ENCODE measurements at regions of chr9 and their contacts with region 1.

Region 1: DNA sequence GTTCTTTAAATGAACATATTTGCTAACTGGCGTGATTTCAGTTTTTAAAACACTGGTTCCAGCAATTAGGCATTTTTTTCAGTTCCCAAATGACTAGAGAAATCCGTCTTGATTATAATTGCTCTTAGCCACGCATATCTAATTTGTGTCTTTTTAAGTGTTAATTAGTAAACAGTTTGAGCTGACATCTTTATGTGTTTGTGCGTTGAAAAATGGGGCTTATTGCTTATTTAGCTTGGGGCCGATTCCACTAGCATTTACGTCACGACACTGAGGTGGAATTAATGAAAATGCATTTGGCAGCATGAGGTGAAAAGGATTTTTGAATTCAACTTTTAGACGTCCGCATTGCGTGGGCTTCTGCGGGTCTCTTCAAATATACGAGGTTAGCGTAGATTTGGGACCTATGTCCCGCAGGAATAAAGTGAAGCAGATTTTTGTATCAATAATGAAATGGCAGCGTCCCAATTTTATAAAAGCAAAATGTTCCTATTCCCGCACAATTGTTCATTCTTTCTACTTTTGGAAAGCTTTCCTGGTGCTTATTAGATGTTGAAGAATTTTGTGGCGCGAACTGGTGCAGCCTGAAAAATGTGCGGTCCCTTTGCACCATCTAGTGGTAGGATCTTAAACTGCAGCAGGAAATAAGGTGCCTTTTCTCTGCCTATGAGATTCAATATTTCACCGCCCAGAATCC is 122.7 kb upstream of the LMX1B start:
- DNase-seq: peak; percentile 66
- ATAC-seq: no peak
- H3K4me3 Mint-ChIP-seq: no peak overlapping the region
- H3K27ac Mint-ChIP-seq: no peak overlapping the region
- H3K4me1 Mint-ChIP-seq: peaks cover 16% of the 10 kb centered on the region
- H3K27me3 Mint-ChIP-seq: no peaks in the 10 kb centered on the region

Region 2: DNA sequence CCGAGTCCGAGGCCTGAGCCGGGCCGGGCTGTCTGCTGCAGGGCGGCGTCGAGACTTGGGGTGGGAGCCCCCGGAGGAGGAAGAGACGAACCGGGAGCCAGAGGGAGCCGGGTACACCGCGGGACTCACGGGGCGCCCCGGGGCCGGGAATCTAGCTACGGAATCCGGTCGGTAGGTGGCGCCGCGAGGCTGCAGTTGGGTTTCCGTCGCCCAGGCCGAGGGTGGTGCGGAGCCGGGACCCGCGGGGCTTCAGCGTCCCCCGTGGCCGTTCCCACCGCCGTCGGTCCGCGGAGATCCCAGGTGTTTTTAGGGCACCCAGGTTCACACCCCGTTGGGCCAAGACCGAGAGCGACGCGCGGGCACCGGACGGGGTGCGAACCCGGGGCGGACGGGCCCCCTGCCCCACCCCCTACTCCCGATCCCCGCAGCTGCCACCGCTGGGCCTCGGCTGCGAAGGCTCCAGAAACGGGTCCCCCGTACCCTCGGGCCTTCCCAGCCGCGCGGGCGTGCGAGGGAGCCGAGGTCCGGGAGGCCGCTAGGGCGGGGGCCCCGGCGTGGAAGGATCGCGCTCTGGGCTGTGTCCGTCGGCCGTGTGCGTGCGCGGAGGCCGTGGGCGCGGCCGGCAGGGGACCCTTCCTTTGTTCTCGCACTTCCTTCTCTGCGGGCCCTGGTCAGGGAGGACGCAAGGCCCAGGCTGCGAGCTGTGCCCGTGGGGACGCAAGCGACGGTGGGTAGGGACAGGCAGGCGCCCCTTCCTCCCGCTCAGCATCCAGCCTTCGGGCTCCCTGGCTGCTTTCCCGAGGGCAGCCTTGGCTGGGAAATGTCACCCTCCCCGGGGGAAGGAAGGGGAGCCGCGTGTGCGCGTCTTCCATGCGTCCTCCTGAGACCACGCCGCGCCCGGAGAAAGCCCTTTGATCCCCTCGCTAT is 1082.8 kb before region 1 on chr9:
- CTCF ChIA-PET with region 1: interaction called, 14 read pairs
- DNase-seq: peak; percentile 78
- ATAC-seq: peak; percentile 85
- H3K4me3 Mint-ChIP-seq: peak overlapping the region; percentile 38
- H3K27ac Mint-ChIP-seq: no peak overlapping the region
- H3K4me1 Mint-ChIP-seq: peaks cover 12% of the 10 kb centered on the region
- H3K27me3 Mint-ChIP-seq: peaks cover 22% of the 10 kb centered on the region

Region 3: DNA sequence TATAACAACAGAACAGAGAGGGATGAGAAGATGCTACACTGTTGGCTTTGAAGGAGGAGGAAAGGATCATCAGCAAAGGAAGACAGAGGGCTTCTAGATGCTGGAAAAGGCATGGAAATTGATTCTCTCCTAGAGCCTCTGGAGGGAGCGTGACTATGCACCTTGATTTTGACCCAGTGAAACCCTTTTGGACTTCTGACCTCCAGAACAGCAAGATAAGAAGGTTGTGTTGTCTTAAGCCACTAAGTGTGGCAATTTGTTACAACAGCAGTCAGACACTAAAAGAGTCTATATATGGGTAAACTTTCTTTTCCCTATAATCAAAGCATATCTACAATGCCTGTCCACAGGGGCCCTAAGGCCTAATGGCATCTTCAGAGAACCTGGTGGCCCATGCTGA is 220.5 kb before region 1 on chr9:
- CTCF ChIA-PET with region 1: no interaction called
- DNase-seq: no peak
- ATAC-seq: no peak
- H3K4me3 Mint-ChIP-seq: no peak overlapping the region
- H3K27ac Mint-ChIP-seq: no peak overlapping the region
- H3K4me1 Mint-ChIP-seq: no peaks in the 10 kb centered on the region
- H3K27me3 Mint-ChIP-seq: peaks cover 16% of the 10 kb centered on the region

Region 4: DNA sequence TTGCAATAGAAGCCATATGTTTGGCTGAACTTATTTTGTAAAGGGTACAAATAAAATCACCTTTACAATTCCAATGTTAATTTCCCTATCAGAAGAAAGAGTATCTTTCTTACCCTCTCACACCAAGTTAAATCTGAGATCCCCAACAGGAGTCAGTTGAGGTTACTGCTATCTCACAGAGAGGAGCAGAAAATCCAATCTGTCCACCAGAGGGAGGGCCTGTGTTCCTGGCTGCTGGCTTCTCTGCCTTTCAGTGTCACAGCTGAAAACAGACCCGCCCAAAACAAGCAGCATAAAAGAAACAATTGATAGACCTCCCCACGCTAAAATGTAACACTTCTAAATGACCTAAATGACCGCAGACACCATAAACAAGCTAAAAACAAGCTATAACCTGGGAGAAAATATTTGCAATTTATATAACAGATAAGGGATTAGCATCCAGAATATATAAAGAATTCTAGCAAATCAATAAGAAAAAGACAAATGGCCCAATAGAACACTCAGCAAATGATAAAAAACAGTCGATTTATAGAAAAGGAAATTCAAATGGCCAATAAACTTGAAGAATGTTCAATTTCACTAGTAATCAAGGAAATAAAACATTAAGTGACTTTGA is 188.9 kb before region 1 on chr9:
- CTCF ChIA-PET with region 1: interaction called, 30 read pairs
- DNase-seq: peak; percentile 81
- ATAC-seq: peak; percentile 93
- H3K4me3 Mint-ChIP-seq: no peak overlapping the region
- H3K27ac Mint-ChIP-seq: peak overlapping the region; percentile 16
- H3K4me1 Mint-ChIP-seq: peaks cover 18% of the 10 kb centered on the region
- H3K27me3 Mint-ChIP-seq: peaks cover 4% of the 10 kb centered on the region

Region 5: GRCh38 chr9:126317513-126317912 is 173.5 kb before region 1 on chr9:
- CTCF ChIA-PET with region 1: interaction called, 14 read pairs
- DNase-seq: peak; percentile 59
- ATAC-seq: no peak
- H3K4me3 Mint-ChIP-seq: no peak overlapping the region
- H3K27ac Mint-ChIP-seq: no peak overlapping the region
- H3K4me1 Mint-ChIP-seq: peaks cover 34% of the 10 kb centered on the region
- H3K27me3 Mint-ChIP-seq: no peaks in the 10 kb centered on the region

Region 6: DNA sequence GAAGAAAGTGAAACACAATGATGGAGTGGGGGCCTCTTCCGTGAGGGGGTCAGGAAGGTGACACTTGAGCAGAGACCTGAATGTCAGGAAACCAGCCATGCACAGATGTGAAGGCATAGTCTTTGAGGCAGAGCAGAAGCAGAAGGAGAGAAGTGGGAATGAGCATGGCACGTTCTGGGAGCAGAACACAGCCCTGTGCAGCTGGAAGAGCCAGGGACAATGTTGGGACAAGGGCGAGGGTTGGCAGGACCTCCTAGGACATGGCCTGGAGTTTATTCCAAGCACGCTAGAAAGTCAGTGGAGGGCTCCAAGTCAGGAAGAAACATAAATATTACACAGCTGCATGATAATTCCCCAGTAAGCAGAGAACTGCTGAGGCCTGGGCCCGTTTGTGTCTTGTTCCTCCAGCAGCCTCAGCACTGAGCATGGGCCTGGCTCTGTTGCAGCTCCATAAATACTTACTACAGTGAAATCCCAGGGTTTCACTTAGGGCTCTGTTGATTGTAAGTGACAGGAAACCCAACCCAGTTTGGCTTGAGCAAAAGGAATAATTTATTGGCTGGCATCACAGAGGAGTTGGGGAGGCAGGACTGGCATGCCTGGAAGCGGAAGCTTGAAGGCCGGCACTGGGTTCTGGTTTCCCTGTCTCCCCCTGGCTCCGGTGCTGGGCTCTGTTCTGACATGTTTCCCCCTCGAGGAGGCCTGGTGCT is 98.2 kb before region 1 on chr9:
- CTCF ChIA-PET with region 1: interaction called, 84 read pairs
- DNase-seq: no peak
- ATAC-seq: no peak
- H3K4me3 Mint-ChIP-seq: no peak overlapping the region
- H3K27ac Mint-ChIP-seq: peak overlapping the region; percentile 21
- H3K4me1 Mint-ChIP-seq: peaks cover 90% of the 10 kb centered on the region
- H3K27me3 Mint-ChIP-seq: no peaks in the 10 kb centered on the region

Region 7: DNA sequence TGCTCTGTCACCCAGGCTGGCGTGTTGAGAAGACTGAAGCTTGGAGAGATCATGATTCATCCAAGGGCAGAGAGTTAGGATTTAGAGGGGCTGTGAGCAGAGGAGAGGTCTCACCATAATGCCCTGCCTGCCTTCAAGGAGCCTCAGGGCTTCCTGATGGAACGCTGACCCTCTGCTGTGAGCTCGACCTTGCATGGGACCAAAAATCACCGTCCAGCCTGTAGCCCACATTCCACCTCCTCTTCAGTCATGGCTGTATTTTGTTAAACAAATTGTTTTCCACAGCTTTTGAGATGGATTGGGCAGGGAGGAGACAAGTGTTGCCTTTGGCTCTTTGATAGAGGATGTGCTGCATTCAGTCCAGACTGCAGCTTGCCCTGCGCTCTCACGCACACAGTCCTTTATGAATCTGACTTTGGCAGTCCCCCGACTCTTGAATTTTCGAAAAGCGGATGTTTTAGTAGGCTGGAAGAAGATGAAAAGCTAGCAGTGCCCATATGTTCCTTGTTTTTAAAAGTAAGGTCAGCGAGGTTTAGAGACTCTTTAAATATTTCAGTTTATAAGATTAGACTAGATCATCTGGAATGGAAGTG is 84.8 kb before region 1 on chr9:
- CTCF ChIA-PET with region 1: interaction called, 16 read pairs
- DNase-seq: no peak
- ATAC-seq: no peak
- H3K4me3 Mint-ChIP-seq: no peak overlapping the region
- H3K27ac Mint-ChIP-seq: peak overlapping the region; percentile 20
- H3K4me1 Mint-ChIP-seq: peaks cover 41% of the 10 kb centered on the region
- H3K27me3 Mint-ChIP-seq: no peaks in the 10 kb centered on the region

Region 8: GRCh38 chr9:126471084-126471624 is 19.9 kb before region 1 on chr9:
- CTCF ChIA-PET with region 1: interaction called, 62 read pairs
- DNase-seq: peak; percentile 96
- ATAC-seq: peak; percentile 80
- H3K4me3 Mint-ChIP-seq: peak overlapping the region; percentile 33
- H3K27ac Mint-ChIP-seq: peak overlapping the region; percentile 92
- H3K4me1 Mint-ChIP-seq: peaks cover 68% of the 10 kb centered on the region
- H3K27me3 Mint-ChIP-seq: peaks cover 3% of the 10 kb centered on the region

Measured in activated CD8-positive, alpha-beta memory T cell treated with anti-CD3 and anti-CD28 coated beads, Interleukin-2, amount 10 ng/mL, durations not matched to agents 7 days and 5 days (primary cell).